IMR-90 (cell line): ENCODE measurements at regions of chr13 and their contacts with region 1.

Region 1: GRCh38 chr13:25375727-25376358 is 4.1 kb downstream of the ATP8A2 start:
- DNase-seq: peak; percentile 31
- ATAC-seq: peak; percentile 58
- H3K4me3 ChIP-seq: no peak overlapping the region
- H3K27ac ChIP-seq: no peak overlapping the region
- H3K4me1 ChIP-seq: no peaks in the 10 kb centered on the region
- H3K27me3 ChIP-seq: peaks cover 46% of the 10 kb centered on the region
- CTCF ChIP-seq: peak; percentile 64
- POLR2A ChIP-seq: no peak
- RAD21 ChIP-seq: peak; percentile 54

Region 2: DNA sequence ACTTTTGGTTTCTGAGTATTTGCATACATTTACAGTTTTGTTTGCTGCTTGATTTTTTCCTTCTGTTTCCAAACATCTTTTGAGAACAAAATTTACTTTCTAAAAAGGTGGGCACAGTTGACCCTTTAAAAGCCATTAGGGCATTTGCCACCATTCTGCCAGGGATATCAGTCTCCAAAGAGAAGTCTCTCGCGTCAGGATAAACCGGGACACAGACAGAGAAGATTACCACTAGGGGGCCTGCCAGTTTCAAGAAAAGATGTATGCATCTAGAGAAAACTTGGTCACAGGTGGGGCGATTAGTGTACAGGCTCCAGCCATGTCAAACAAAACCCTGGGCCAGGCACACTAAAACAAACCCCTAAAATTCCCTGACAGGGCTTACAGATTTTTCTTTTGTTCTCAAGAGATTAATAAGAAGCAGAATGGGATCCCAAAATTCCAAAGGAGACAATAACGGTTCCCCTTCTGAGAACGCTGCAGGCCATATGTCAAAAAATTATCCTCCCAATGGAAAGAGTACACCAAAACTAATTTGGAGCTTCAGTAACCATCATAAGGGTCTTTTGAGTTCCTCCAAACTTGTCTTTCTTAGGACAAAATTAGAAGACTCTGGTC is 290.6 kb before region 1 on chr13:
- CTCF ChIA-PET with region 1: no interaction called
- POLR2A ChIA-PET with region 1: no interaction called
- dilution Hi-C with region 1: no loop called
- in situ Hi-C with region 1: loop called (anchors 25 kb)
- intact Hi-C with region 1: loop called (anchors 2 kb)
- DNase-seq: peak; percentile 26
- ATAC-seq: peak; percentile 56; the same call in 1 of the 2 replicates
- H3K4me3 ChIP-seq: no peak overlapping the region
- H3K27ac ChIP-seq: no peak overlapping the region
- H3K4me1 ChIP-seq: no peaks in the 10 kb centered on the region
- H3K27me3 ChIP-seq: peaks cover 3% of the 10 kb centered on the region; the same call in 1 of the 2 replicates
- CTCF ChIP-seq: peak; percentile 56
- POLR2A ChIP-seq: no peak
- RAD21 ChIP-seq: peak; percentile 49

Region 3: GRCh38 chr13:25186187-25186586 is 189.7 kb before region 1 on chr13:
- CTCF ChIA-PET with region 1: no interaction called
- POLR2A ChIA-PET with region 1: no interaction called
- dilution Hi-C with region 1: no loop called
- in situ Hi-C with region 1: no loop called
- intact Hi-C with region 1: no loop called
- DNase-seq: no peak
- ATAC-seq: no peak
- H3K4me3 ChIP-seq: no peak overlapping the region
- H3K27ac ChIP-seq: no peak overlapping the region
- H3K4me1 ChIP-seq: no peaks in the 10 kb centered on the region
- H3K27me3 ChIP-seq: peaks cover 11% of the 10 kb centered on the region
- CTCF ChIP-seq: no peak
- POLR2A ChIP-seq: no peak
- RAD21 ChIP-seq: no peak

Region 4: DNA sequence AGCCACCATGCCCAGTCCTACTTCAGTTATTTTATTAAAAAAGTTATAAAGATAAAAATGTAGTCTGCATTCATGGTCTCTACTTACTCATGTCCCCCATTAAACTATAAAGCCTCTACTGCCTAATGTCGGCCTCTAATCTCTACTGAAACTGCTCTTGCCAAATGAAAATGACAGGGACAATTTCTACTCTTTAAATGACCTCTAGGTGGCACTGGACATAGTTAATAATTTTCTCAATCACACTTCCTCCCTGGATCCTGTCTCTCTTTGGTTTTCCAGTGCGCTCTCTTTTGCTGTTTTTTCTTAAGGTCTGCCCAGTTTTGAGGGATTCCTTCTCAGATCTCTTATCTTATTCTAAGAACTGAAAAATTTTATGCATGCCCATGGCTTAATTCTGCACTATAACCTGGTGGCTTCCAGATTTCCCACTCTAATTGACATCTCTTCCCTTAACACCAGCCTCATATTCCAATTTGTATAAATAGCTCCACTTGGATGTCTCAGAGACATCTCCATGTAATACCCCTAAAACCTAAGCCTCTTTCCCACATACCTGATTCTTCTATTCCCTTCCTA is 142.8 kb before region 1 on chr13:
- CTCF ChIA-PET with region 1: interaction called, 6 read pairs
- POLR2A ChIA-PET with region 1: no interaction called
- dilution Hi-C with region 1: no loop called
- in situ Hi-C with region 1: loop called (anchors 10 kb)
- intact Hi-C with region 1: loop called (anchors 1 kb)
- DNase-seq: peak; percentile 21
- ATAC-seq: peak; percentile 66
- H3K4me3 ChIP-seq: no peak overlapping the region
- H3K27ac ChIP-seq: no peak overlapping the region
- H3K4me1 ChIP-seq: no peaks in the 10 kb centered on the region
- H3K27me3 ChIP-seq: peaks cover 3% of the 10 kb centered on the region
- CTCF ChIP-seq: peak; percentile 49
- POLR2A ChIP-seq: no peak
- RAD21 ChIP-seq: peak; percentile 39

Region 5: DNA sequence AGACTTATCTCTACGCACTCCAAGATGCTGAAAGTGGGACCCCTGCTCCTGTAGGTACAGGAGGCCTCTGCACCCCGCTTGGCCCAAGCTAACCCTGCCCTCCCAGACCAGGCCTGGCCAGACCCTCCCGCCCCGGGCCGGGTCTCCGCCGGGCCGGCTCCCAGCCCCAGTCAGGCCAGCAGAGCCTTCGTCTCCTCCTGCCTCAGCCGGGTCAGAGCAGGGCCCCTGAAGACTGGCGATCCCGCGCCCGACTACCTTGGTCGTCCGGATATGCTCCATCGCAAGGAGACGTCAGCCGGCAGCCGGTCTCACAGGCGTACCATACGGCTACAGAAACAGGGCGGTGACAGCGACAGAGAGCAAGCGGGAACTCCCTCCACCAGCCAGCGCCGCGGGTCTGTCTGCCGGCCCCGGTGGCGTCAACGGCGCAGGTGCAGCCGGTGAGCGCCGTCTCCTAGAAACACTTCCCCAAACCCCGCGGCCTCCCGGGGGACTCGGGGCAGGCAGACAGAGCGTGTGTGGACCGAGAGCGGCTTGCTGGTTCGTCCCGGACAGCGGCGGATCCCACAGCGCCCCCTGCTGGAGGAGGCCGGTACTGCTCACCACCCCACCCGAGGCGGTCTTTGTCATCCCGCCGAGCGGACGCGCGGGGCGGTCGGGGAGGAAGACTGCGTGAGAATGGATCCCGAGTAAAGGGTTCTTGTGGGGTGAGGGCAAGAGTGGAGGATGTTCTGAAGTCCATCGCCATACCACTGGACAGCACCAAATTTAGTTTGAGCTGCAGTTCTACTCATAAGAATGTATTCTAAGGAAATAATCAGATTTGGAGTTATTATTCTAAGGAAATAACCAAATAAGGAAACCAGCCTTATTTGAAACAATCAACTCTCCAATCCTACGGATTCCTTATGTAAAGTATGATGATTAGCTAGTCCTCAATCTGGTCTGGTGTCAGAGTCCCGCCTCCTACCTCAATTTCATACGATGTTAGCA is 88.6 kb before region 1 on chr13 and contains the start of gene MTMR6:
- CTCF ChIA-PET with region 1: no interaction called
- POLR2A ChIA-PET with region 1: no interaction called
- dilution Hi-C with region 1: no loop called
- in situ Hi-C with region 1: no loop called
- intact Hi-C with region 1: loop called (anchors 1 kb)
- DNase-seq: peak; percentile 82
- ATAC-seq: peak; percentile 99
- H3K4me3 ChIP-seq: peak within 1 kb of the TSS; percentile 93
- H3K27ac ChIP-seq: peak within 1 kb of the TSS; percentile 72
- H3K4me1 ChIP-seq: no peaks in the 10 kb centered on the region
- H3K27me3 ChIP-seq: 0 out of 2 replicates have a peak, but pooled peaks cover 3% of the 10 kb centered on the region
- CTCF ChIP-seq: peak; percentile 97
- POLR2A ChIP-seq: peak; percentile 83
- RAD21 ChIP-seq: peak; percentile 58
- total RNA-seq, gene MTMR6: 21.7 and 33.1 TPM in 2 replicates